Heart right ventricle (tissue), 16 donors: ENCODE measurements at regions of chr16 and their contacts with region 1.

Region 1: DNA sequence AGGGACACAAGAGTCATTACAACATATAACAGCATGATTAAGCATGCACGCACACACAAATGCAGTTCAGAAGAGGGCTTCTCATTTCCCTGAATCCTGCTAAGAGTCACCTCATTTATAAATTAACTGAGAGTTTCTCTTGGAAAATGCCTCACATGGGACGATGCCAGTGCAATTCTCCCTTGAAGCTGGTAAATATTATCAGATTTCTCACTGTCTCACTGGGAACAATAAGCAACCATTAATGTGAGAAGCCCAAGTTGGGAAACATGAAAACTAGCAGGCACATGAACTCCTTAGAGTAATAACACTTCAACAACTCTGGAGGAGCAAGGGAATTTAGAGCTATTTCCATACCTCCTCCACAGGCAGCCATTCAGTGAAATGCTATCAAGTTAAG is 26.4 kb downstream of the SETD6 start:
- DNase-seq: no peak
- ATAC-seq: no peak
- H3K4me3 ChIP-seq: no peak overlapping the region
- H3K27ac ChIP-seq: no peak overlapping the region
- H3K4me1 ChIP-seq: peaks cover 0 to 15% (median 3%) of the 10 kb centered on the region in 9 donors
- H3K27me3 ChIP-seq: no peaks in the 10 kb centered on the region
- CTCF ChIP-seq: no peak

Region 2: DNA sequence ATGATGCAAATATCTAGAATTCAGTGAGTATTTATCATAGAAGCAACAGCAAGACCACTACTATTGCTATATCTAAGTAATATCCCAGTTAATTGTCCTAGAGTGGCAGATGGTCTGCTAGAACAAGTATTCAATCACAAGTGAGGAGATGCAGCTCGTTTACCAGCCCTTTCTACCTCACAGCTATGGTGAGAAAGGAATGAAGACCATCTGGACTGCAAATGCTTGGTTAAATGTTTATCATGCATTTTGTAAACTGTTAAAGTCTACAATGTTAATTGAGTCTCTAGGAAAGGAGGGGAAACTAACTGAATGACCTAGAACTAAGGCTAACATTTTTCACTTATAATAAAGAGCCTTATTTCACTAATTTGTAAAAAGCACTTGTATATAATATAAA is 35.4 kb after region 1 on chr16:
- intact Hi-C with region 1: loop called in 4 of 10 experiments (anchors 5 to 10 kb)
- DNase-seq: no peak
- ATAC-seq: no peak
- H3K4me3 ChIP-seq: no peak overlapping the region
- H3K27ac ChIP-seq: peak overlapping the region in 1 of 10 donors; percentile 34
- H3K4me1 ChIP-seq: peaks cover 0 to 17% (median 0%) of the 10 kb centered on the region in 9 donors
- H3K27me3 ChIP-seq: no peaks in the 10 kb centered on the region
- CTCF ChIP-seq: no peak